ENCODE measurements at regions of chr7 and their contacts with region 1.

Region 1: DNA sequence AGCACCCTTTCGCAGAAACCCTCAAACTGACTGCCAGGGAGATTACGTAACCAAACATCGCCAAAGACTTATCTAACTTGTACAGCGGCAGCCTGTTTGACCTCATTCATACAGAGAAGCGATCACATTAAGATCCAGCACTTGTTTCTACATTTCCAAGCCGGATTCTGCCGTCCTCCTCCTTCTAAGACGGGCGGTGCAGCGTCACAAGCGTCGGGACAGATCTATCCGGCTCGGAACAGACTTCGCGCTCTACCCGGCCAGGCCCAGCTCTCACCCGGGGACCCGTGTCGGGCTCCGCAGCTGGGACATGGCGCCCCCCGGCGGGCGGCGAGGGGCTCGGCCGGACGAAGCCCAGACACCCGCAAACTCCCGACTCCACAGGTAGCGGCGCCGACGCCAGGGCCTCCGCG is 373 bp downstream of the H2AZ2 start:
- DNase-seq: peak in 8 of 9 donors; percentile 84 to 94 (median 91)
- ATAC-seq: peak; percentile 68
- H3K4me3 ChIP-seq: peak overlapping the region; percentile 91
- H3K4me3 Mint-ChIP-seq: peak overlapping the region; percentile 89 to 99 (median 94)
- H3K27ac ChIP-seq: peak overlapping the region; percentile 96
- H3K27ac Mint-ChIP-seq: peak overlapping the region; percentile 95 to 100 (median 98)
- H3K4me1 ChIP-seq: peaks cover 0 to 11% of the 10 kb centered on the region in 2 donors
- H3K4me1 Mint-ChIP-seq: peaks cover 21 to 58% (median 33%) of the 10 kb centered on the region in 7 donors
- H3K27me3 ChIP-seq: no peaks in the 10 kb centered on the region
- H3K27me3 Mint-ChIP-seq: peaks cover 0 to 2% (median 0%) of the 10 kb centered on the region in 5 donors

Region 2: DNA sequence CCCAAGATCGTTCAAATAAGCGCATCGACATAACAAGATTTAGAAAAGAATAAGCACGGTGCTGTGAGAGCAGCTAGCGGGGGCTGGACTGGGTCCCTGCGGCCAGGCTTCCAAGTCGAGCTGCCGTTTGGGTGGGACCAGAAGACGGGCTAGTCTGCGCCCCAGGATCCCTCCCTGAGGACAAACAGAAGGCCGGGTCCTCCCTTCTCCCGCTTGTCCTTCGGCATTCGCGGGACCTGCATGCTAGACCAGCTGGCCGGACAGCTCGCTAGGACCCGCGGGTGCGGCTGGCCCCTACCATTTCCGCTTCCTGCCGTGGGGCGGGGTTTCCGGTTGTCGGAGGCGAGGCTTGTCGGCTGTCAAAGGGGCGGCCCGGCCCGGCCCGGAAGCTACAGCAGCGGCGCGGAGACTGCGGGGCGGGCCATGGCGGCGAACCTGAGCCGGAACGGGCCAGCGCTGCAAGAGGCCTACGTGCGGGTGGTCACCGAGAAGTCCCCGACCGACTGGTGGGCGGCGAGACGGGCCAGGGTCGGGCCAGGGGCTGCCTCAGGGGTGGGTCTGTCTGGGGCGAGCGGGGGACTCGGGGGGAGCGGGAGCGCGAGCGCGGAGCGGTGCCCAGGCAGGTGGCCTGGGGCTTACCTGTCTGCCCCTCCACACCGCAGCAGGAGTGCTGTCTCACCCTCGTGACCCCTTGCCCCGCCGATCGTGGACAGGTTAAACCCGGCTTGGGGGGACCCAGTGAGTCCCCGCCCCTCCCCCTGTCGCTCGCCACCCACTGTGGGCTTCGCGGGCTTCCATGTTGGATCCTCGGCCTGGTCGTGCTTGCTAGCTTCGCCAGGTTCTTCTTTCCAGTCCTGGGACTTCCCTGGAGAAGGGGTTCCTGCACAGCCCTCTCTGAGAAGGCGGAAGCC is 802.9 kb before region 1 on chr7 and contains the start of gene DBNL:
- CTCF ChIA-PET with region 1: no interaction called
- POLR2A ChIA-PET with region 1: no interaction called
- intact Hi-C with region 1: loop called in 1 of 2 experiments (anchors 5 kb)
- DNase-seq: peak; percentile 79 to 96 (median 84)
- ATAC-seq: peak; percentile 68
- H3K4me3 ChIP-seq: peak within 1 kb of the TSS; percentile 87
- H3K4me3 Mint-ChIP-seq: peak within 1 kb of the TSS; percentile 84 to 97 (median 92)
- H3K27ac ChIP-seq: peak within 1 kb of the TSS; percentile 93
- H3K27ac Mint-ChIP-seq: peak within 1 kb of the TSS; percentile 86 to 99 (median 96)
- H3K4me1 ChIP-seq: peaks cover 23 to 41% of the 10 kb centered on the region in 2 donors
- H3K4me1 Mint-ChIP-seq: peaks cover 38 to 60% (median 55%) of the 10 kb centered on the region in 7 donors
- H3K27me3 ChIP-seq: no peaks in the 10 kb centered on the region
- H3K27me3 Mint-ChIP-seq: no peaks in the 10 kb centered on the region
- total RNA-seq, gene DBNL: 112 to 182 (median 164) TPM

Region 3: GRCh38 chr7:44240983-44241510 is 606.5 kb before region 1 on chr7:
- CTCF ChIA-PET with region 1: no interaction called
- POLR2A ChIA-PET with region 1: no interaction called
- intact Hi-C with region 1: loop called (anchors 1 to 5 kb)
- DNase-seq: peak; percentile 40 to 70 (median 66)
- ATAC-seq: peak; percentile 81
- H3K4me3 ChIP-seq: peak overlapping the region; percentile 27
- H3K4me3 Mint-ChIP-seq: peak overlapping the region in 8 of 10 donors; percentile 37 to 69 (median 50)
- H3K27ac ChIP-seq: no peak overlapping the region
- H3K27ac Mint-ChIP-seq: peak overlapping the region in 2 of 9 donors; percentile 39 to 62
- H3K4me1 ChIP-seq: no peaks in the 10 kb centered on the region
- H3K4me1 Mint-ChIP-seq: peaks cover 0 to 4% (median 0%) of the 10 kb centered on the region in 7 donors
- H3K27me3 ChIP-seq: no peaks in the 10 kb centered on the region
- H3K27me3 Mint-ChIP-seq: peaks cover 0 to 3% (median 0%) of the 10 kb centered on the region in 5 donors

Region 4: GRCh38 chr7:44581879-44582603 is 265.5 kb before region 1 on chr7 and contains the start of gene TMED4:
- CTCF ChIA-PET with region 1: interaction called, 3 read pairs
- POLR2A ChIA-PET with region 1: interaction called, 53 read pairs
- intact Hi-C with region 1: loop called (anchors 1 kb)
- DNase-seq: peak; percentile 100
- ATAC-seq: peak; percentile 96
- H3K4me3 ChIP-seq: peak within 1 kb of the TSS; percentile 95
- H3K4me3 Mint-ChIP-seq: peak within 1 kb of the TSS; percentile 86 to 97 (median 92)
- H3K27ac ChIP-seq: peak within 1 kb of the TSS; percentile 90
- H3K27ac Mint-ChIP-seq: peak within 1 kb of the TSS; percentile 95 to 99 (median 98)
- H3K4me1 ChIP-seq: peaks cover 14 to 19% of the 10 kb centered on the region in 2 donors
- H3K4me1 Mint-ChIP-seq: peaks cover 13 to 43% (median 38%) of the 10 kb centered on the region in 7 donors
- H3K27me3 ChIP-seq: no peaks in the 10 kb centered on the region
- H3K27me3 Mint-ChIP-seq: peaks cover 0 to 12% (median 0%) of the 10 kb centered on the region in 5 donors
- total RNA-seq, gene TMED4: 70.0 to 98.5 (median 95.3) TPM

Region 5: GRCh38 chr7:44706788-44707560 is 140.5 kb before region 1 on chr7:
- CTCF ChIA-PET with region 1: interaction called, 3 read pairs
- POLR2A ChIA-PET with region 1: interaction called, 3 read pairs
- intact Hi-C with region 1: loop called in 1 of 2 experiments (anchors 1 kb)
- DNase-seq: no peak
- ATAC-seq: no peak
- H3K4me3 ChIP-seq: no peak overlapping the region
- H3K4me3 Mint-ChIP-seq: no peak overlapping the region
- H3K27ac ChIP-seq: no peak overlapping the region
- H3K27ac Mint-ChIP-seq: no peak overlapping the region
- H3K4me1 ChIP-seq: peaks cover 0 to 2% of the 10 kb centered on the region in 2 donors
- H3K4me1 Mint-ChIP-seq: peaks cover 2 to 5% (median 3%) of the 10 kb centered on the region in 7 donors
- H3K27me3 ChIP-seq: no peaks in the 10 kb centered on the region
- H3K27me3 Mint-ChIP-seq: no peaks in the 10 kb centered on the region

Region 6: GRCh38 chr7:44885394-44886317 is 38.1 kb after region 1 on chr7 and contains the start of gene PURB:
- CTCF ChIA-PET with region 1: interaction called, 3 read pairs
- POLR2A ChIA-PET with region 1: interaction called, 60 read pairs
- intact Hi-C with region 1: loop called (anchors 1 kb)
- DNase-seq: peak; percentile 97 to 99 (median 97)
- ATAC-seq: peak; percentile 92
- H3K4me3 ChIP-seq: peak within 1 kb of the TSS; percentile 88
- H3K4me3 Mint-ChIP-seq: peak within 1 kb of the TSS; percentile 92 to 97 (median 93)
- H3K27ac ChIP-seq: peak within 1 kb of the TSS; percentile 99
- H3K27ac Mint-ChIP-seq: peak within 1 kb of the TSS; percentile 98 to 100 (median 99)
- H3K4me1 ChIP-seq: peaks cover 26 to 50% of the 10 kb centered on the region in 2 donors
- H3K4me1 Mint-ChIP-seq: peaks cover 7 to 61% (median 46%) of the 10 kb centered on the region in 7 donors
- H3K27me3 ChIP-seq: no peaks in the 10 kb centered on the region
- H3K27me3 Mint-ChIP-seq: peaks cover 0 to 2% (median 0%) of the 10 kb centered on the region in 5 donors
- total RNA-seq, gene PURB: 16.5 to 30.5 (median 23.3) TPM

Region 7: GRCh38 chr7:44987996-44988395 is 140.5 kb after region 1 on chr7:
- CTCF ChIA-PET with region 1: no interaction called
- POLR2A ChIA-PET with region 1: no interaction called
- intact Hi-C with region 1: no loop called
- DNase-seq: no peak
- ATAC-seq: no peak
- H3K4me3 ChIP-seq: no peak overlapping the region
- H3K4me3 Mint-ChIP-seq: peak overlapping the region in 7 of 10 donors; percentile 41 to 100 (median 96)
- H3K27ac ChIP-seq: no peak overlapping the region
- H3K27ac Mint-ChIP-seq: peak overlapping the region; percentile 41 to 99 (median 97)
- H3K4me1 ChIP-seq: peaks cover 25 to 28% of the 10 kb centered on the region in 2 donors
- H3K4me1 Mint-ChIP-seq: peaks cover 24 to 58% (median 46%) of the 10 kb centered on the region in 7 donors
- H3K27me3 ChIP-seq: no peaks in the 10 kb centered on the region
- H3K27me3 Mint-ChIP-seq: no peaks in the 10 kb centered on the region

Region 8: DNA sequence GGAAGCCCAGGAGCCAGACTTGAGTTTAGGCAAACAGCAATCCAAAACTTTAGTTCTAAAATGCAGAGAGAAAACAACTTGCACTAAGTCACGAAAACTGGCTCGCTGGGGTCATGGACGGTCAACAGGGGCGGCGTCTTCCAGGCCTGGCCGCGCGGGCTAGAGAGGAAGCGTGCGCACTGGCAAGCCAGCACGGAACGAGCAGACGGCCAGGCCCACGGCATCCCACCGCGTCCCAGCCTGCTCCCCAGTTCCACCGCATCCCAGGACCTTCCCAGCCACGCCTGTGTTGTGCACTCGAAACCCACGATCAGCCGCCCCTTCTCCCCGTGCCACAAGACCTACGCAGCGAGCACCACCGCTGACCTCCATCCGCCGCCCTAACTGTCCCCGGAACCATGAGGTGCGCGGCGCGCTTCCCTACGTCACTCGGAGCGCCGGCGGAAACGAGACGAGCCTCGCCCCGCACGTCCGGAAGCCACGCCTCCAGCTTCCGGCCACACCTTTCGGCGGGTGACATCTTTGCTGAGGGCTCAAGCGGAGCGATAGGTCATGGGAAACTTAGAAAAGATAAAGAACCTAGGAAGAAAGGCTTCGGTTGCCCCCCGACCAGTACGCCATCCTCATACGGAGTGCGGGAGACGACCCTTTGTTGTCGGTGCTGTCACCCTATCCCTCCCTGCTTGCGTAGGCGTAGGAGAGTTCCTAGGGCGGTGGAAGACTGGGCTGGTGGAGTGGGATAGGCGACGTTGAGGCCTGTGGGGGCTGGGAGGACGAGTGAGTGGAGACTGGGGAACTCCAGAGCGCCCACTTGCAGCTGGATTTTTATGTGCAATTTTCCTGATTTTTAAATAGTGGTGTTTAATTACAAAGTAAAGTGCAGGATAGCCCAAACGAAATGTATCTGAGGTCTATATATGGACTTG is 264.0 kb after region 1 on chr7 and contains the start of gene TBRG4:
- CTCF ChIA-PET with region 1: interaction called, 4 read pairs
- POLR2A ChIA-PET with region 1: interaction called, 10 read pairs
- intact Hi-C with region 1: loop called (anchors 1 to 2 kb)
- DNase-seq: peak; percentile 88 to 96 (median 94)
- ATAC-seq: peak; percentile 94
- H3K4me3 ChIP-seq: peak within 1 kb of the TSS; percentile 80
- H3K4me3 Mint-ChIP-seq: peak within 1 kb of the TSS; percentile 93 to 100 (median 96)
- H3K27ac ChIP-seq: peak within 1 kb of the TSS; percentile 98
- H3K27ac Mint-ChIP-seq: peak within 1 kb of the TSS; percentile 98 to 100 (median 99)
- H3K4me1 ChIP-seq: peaks cover 17 to 45% of the 10 kb centered on the region in 2 donors
- H3K4me1 Mint-ChIP-seq: peaks cover 30 to 59% (median 50%) of the 10 kb centered on the region in 7 donors
- H3K27me3 ChIP-seq: no peaks in the 10 kb centered on the region
- H3K27me3 Mint-ChIP-seq: peaks cover 0 to 31% (median 0%) of the 10 kb centered on the region in 5 donors
- total RNA-seq, gene TBRG4: 93.7 to 143 (median 107) TPM

Measured in naive thymus-derived CD4-positive, alpha-beta T cell (primary cell).